Astrocyte of the cerebellum (primary cell): ENCODE measurements at regions of chr11 and their contacts with region 1.

Region 1: DNA sequence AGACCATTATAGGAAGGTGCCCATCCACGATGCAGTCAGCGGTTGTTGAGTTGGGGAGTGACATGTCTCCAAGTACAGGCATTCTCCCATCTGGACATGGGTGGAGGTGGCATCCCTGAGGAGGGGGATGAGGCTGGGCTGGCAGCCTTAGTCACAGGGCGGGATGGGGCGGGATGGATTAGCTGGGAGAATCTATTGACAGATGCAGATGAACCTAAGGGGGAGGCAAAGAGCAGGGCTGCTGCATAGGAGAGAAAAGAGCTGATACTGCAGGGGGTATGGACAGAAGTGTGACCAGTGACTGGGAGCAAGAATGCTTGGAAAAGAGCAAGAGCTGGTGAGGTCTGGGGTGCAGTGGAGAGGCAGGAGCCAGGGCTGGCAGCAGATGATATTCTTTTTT is 42.7 kb downstream of the SCN3B start:
- DNase-seq: no peak
- H3K4me3 ChIP-seq: no peak overlapping the region
- CTCF ChIP-seq: no peak

Region 2: DNA sequence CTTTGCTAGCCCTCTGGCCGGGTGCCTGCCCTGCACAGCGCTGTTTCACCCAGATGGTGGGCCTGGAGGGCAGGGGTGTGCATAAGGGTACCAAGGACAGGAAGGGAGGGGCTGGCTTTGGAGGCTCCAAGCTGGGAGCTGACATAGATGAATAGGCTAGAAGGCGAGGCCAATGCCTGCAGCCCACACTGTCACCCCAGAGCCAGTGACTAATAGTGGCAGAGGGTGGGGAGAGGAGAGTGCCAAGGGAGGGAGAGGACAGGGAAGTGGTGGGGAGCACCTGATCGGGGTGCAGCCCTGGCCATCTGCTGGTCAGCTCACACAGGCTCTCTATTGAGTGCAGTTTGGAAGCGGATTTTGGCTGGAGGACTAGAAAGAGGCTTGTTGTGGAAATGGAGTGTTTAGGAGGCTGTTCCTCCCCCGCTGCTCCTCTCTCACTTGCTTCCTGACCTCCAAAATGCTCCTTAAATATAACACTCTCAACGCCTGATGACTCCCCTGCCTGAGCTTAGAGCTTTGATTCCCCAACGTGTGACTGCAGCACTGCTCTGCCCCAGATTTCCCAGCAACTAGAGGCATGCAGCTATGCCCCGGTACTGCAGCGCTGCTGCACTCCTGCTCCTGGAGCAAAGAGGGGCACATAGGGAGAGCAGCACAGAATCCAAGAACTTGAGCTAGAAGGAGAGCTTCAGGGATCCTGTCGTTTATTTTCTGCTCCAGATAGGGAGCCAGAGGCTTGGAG is 92.5 kb before region 1 on chr11:
- in situ Hi-C with region 1: no loop called
- DNase-seq: no peak
- H3K4me3 ChIP-seq: no peak overlapping the region
- CTCF ChIP-seq: no peak

Region 3: DNA sequence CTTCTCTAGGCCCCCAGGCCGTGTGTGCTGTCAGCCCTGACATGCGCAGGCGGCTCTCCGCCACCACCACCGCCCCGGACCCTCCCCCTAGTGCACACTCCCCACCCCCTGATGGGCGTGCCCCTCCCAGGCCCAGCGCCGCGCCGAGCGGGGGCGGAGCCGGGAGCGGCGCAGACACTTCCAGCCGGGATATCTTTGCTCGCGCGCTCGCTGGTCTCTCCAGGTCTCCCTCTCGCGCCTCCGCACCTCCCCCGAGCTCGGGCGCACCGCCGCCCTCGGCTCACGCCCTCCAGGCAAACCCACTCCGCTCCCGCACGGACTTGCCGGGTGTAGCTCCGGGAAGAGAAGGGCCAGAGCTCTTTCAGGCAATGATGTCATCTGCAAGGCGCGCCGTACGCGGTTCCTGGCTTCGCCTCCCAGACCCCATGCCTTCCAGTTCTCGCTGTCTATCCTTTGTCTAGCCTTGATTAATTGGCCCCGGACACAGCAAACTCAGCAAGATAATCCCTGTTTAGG is 42.9 kb after region 1 on chr11 and contains the start of gene SCN3B:
- in situ Hi-C with region 1: no loop called
- DNase-seq: peak; percentile 47
- H3K4me3 ChIP-seq: peak within 1 kb of the TSS; percentile 55
- CTCF ChIP-seq: no peak

Region 4: DNA sequence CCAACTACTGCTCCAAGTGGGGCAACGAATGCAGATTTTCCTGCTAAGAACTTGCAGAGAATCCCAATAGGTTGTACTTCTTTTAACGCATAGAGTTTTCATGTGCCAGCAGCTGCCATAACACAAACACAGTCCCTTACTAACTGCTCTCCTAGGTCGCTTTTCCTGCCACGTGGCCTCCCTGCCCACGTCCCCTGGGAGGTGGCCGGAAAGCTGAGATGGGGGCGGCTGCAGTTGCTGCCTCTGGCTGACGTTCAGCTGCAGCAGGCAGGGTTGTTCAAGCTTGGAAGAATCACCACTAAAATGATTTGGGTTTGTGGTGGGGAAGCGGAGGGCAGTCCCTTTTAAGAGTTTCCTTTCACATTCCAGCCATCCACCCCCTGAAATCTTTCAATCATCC is 90.4 kb after region 1 on chr11:
- in situ Hi-C with region 1: loop called (anchors 5 kb)
- DNase-seq: no peak
- H3K4me3 ChIP-seq: no peak overlapping the region
- CTCF ChIP-seq: no peak